ENCODE measurements at regions of chr20 and their contacts with region 1.

Region 1: DNA sequence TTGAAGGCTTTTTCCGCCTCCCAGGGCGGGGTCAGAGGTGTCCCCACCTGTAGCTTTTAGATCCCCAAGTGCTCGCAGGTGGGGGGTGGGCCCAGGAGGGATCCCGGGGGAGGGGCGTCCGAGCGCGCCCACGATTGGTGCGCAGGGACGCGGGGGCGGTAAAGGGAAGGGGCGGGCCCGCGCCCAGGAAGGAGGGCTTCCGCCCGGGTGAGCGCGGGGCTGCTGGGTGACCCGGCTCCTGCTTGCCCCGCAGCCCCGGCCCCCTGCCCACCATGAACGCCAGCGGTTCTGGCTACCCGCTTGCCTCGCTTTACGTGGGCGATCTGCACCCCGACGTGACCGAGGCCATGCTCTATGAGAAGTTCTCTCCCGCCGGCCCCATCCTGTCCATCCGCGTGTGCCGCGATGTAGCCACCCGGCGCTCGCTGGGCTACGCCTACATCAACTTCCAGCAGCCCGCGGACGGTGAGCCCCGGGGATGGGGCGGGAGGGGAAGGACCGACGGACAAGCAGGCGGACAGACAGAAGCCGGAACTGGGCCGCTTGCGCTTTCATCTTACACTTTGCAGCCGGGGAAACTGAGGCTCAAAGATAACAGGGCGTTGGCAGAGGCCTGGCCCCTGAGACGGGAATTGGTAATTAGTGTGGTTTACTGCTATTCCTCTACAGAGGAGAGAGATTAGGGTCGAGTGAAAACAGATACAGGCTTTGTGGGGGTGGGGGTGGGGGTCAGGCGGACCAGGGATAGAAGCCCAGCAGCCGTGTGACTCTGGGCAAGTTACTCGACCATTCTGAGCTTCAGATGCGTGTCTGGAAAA is at the start of gene PABPC1L:
- DNase-seq: peak; percentile 76 to 89
- H3K4me3 ChIP-seq: peak within 1 kb of the TSS; percentile 69
- H3K27ac ChIP-seq: 0 out of 2 replicates have a peak within 1 kb of the TSS, but pooled peaks have one; percentile 24
- H3K4me1 ChIP-seq: peaks cover 4% of the 10 kb centered on the region; the same call in 1 of the 2 replicates
- H3K27me3 ChIP-seq: no peaks in the 10 kb centered on the region
- CTCF ChIP-seq: no peak
- total RNA-seq, gene PABPC1L: 132 and 156 TPM in 2 replicates

Region 2: GRCh38 chr20:44319756-44320422 is 590.2 kb before region 1 on chr20:
- CTCF ChIA-PET with region 1: no interaction called
- POLR2A ChIA-PET with region 1: no interaction called
- intact Hi-C with region 1: no loop called
- DNase-seq: no peak
- H3K4me3 ChIP-seq: no peak overlapping the region
- H3K27ac ChIP-seq: no peak overlapping the region
- H3K4me1 ChIP-seq: no peaks in the 10 kb centered on the region
- H3K27me3 ChIP-seq: peaks cover 15% of the 10 kb centered on the region; the same call in 1 of the 2 replicates
- CTCF ChIP-seq: no peak

Region 3: DNA sequence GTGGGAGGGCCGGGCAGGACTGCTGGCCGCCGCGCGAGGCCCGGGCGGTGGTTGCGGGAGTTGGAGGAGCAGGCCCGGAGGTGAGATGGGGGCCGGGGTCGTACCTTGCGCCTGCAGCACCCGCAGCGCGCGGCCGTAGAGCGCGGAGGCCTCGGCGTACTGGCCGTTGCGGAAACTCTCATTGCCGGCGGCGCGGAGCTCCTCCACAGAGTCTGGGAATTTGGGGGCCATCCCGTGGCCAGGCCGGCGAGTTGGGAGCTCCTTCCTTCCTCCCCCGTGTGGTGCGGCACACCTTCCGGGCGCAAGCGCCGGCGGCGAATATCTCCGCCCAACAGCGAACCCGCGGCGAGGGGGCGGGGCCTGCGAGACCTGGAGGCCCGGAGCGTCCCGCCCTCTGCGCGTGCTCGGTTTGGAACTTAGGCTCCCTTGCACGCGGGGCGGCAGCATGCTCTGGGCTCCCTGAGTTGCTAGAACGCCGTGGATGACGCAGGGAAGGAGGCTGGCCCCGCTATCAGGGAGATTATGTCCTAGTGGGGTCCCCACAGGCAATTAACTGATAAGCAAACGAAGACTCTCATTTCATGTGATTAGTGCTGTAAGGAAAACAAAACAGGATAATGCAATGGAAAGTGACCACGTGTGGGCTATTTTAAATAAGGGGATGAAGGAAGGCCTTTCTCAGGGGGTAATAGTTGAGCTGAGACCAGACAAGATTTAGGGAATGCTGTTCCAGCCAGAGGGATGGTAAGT is 50.2 kb after region 1 on chr20 and contains the start of gene TOMM34:
- CTCF ChIA-PET with region 1: no interaction called
- POLR2A ChIA-PET with region 1: no interaction called
- intact Hi-C with region 1: loop called (anchors 2 kb)
- DNase-seq: peak; percentile 84 to 97
- H3K4me3 ChIP-seq: peak within 1 kb of the TSS; percentile 97
- H3K27ac ChIP-seq: peak within 1 kb of the TSS; percentile 64
- H3K4me1 ChIP-seq: peaks cover 37% of the 10 kb centered on the region
- H3K27me3 ChIP-seq: no peaks in the 10 kb centered on the region
- CTCF ChIP-seq: no peak
- total RNA-seq, gene TOMM34: 65.9 and 71.1 TPM in 2 replicates

Region 4: DNA sequence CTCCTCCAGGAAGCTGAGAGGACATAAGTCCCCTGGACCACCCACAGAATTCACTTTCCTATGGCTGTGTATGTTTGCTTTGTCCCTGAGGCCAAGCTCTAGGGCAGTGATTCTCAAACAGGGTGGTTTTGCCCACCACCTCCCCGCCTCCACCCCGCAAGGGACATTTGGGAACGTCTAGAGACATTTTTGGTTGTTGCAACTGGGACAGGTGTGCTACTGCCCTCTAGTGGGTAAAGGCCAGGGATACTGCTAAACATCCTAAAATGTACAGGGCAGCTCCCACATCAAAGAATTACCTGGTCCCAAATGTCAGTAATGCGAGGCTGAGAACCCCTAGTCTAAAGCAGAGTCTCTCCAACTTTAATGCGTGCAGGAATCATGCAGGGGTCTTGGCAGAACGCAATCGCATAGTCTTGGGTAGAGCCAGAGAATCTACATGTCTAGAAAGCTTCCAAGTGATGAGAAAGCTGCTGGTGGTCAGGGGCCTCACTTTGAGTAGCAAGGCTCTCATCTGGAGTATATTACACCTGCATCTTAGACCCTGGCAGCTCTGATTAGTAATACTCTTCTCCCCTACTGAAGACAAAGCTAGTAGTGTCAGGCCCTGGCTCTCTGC is 185.8 kb after region 1 on chr20:
- CTCF ChIA-PET with region 1: interaction called, 4 read pairs
- POLR2A ChIA-PET with region 1: interaction called, 6 read pairs
- intact Hi-C with region 1: loop called (anchors 5 kb)
- DNase-seq: peak; percentile 54 to 65
- H3K4me3 ChIP-seq: no peak overlapping the region
- H3K27ac ChIP-seq: no peak overlapping the region
- H3K4me1 ChIP-seq: no peaks in the 10 kb centered on the region
- H3K27me3 ChIP-seq: no peaks in the 10 kb centered on the region
- CTCF ChIP-seq: peak; percentile 91

Region 5: GRCh38 chr20:45946149-45946970 is 1036.3 kb after region 1 on chr20:
- CTCF ChIA-PET with region 1: no interaction called
- POLR2A ChIA-PET with region 1: interaction called, 17 read pairs
- intact Hi-C with region 1: no loop called
- DNase-seq: peak; percentile 65 to 81
- H3K4me3 ChIP-seq: no peak overlapping the region
- H3K27ac ChIP-seq: peak overlapping the region; percentile 18; the same call in 1 of the 2 replicates
- H3K4me1 ChIP-seq: peaks cover 37% of the 10 kb centered on the region
- H3K27me3 ChIP-seq: no peaks in the 10 kb centered on the region
- CTCF ChIP-seq: no peak

Measured in PC-9 (cell line).